ENCODE measurements at regions of chr7 and their contacts with region 1.

Region 1: DNA sequence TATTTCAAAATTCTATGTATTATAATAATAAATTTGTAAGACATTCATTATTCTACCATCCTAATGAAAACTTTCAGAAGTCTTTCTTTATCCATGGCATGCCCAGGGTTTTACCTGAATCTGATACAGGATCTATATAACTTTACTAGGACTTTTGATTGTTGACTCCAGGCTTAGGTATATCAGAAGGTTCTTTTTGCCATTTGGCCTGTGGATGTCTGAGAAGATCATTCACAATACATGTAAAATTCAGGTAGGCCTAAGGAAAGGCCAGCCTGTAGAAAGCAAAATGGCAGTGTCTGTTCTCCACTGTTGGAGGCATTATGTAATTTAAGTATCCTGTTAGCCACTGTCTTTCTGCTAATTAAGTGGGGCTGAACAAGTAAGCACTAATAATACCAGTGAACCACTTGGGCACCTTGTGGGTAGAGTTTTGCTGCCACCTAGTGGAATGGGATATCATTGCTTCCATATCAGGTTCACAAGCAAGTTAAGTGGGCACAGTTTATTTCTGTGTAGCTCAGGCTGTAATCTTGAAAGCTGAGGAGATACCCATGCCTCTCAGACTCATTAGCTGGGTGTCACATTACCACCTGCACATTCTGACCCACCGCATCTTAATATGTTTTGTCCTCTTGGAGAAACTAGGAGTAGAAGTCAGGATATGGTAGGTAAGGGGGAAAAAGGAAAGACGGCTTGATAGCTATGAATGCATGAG is 105.5 kb downstream of the SEPTIN7 start:
- DNase-seq: peak in 1 of 3 donors; percentile 82
- ATAC-seq: peak; percentile 90
- H3K4me3 ChIP-seq: no peak overlapping the region
- H3K4me1 ChIP-seq: no peaks in the 10 kb centered on the region
- CTCF ChIP-seq: peak; percentile 81

Region 2: DNA sequence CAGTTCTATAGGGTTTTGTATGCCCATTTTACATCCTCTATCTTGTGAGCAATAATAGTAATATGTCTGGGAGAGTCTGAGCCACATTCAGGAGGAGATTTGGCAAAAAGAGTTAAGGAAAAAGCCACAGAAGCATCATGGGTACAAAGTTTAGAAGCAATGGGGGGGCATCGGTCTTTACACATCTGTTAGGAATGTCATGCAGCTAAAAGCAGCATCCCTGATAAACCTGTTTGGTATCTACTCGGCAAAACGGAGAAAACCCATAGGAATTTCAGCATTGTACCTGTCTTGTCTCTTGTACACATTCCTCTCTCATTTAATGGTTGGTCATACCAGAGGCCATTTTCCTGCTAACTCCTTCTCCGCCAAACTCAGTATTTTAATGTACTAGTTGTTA is 198.9 kb before region 1 on chr7:
- intact Hi-C with region 1: loop called (anchors 5 kb)
- DNase-seq: no peak
- ATAC-seq: no peak
- H3K4me3 ChIP-seq: no peak overlapping the region
- H3K4me1 ChIP-seq: no peaks in the 10 kb centered on the region
- CTCF ChIP-seq: no peak

Region 3: DNA sequence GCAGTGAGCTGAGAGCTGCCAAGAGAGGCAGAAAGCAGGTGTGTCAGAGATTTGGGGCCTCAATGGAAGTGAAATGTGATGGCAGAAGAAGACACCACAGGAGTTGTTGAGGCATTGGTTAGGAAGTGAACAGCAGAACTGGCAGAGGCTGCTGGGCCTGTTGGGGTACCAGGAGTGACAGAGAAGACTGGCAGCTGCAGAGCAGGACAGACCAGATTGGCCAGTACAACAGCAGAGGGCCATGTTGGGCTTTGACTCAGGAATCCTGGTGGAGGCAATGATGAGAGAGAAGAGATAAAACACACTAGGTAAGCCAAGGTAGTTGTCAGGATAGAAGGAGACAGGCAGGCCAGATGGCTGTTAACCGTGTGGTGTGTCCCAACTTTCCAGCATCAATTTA is 191.5 kb before region 1 on chr7:
- intact Hi-C with region 1: loop called in 1 of 2 experiments (anchors 5 kb)
- DNase-seq: no peak
- ATAC-seq: peak; percentile 27
- H3K4me3 ChIP-seq: no peak overlapping the region
- H3K4me1 ChIP-seq: no peaks in the 10 kb centered on the region
- CTCF ChIP-seq: no peak

Region 4: GRCh38 chr7:35801392-35802101 is 104.8 kb before region 1 on chr7:
- intact Hi-C with region 1: loop called in 1 of 2 experiments (anchors 10 kb)
- DNase-seq: peak; percentile 71 to 86 (median 83)
- ATAC-seq: peak; percentile 57
- H3K4me3 ChIP-seq: peak overlapping the region; percentile 94
- H3K4me1 ChIP-seq: peaks cover 9% of the 10 kb centered on the region
- CTCF ChIP-seq: peak; percentile 30

Region 5: DNA sequence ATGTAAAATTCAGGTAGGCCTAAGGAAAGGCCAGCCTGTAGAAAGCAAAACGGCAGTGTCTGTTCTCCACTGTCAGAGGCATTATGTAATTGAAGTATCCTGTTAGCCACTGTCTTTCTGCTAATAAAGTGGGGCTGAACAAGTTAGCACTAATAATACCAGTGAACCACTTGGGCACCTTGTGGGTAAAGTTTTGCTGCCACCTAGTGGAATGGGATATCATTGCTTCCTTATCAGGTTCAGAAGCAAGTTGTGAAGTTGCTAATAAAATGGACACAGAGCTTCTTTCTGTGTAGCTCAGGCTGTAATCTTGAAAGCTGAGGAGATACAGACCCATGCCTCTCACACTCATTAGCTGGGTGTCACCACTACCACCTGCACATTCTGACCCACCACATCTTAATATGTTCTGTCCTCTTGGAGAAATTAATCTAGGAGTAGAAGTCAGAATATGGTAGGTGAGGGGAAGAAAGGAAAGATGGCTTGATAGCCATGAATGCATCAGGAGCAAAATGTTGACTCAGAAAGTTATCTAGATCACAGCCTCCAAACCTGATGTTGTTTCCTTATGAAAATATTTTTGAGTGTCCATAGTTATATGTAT is 69.6 kb after region 1 on chr7:
- intact Hi-C with region 1: loop called in 1 of 2 experiments (anchors 10 kb)
- DNase-seq: peak in 1 of 3 donors; percentile 78
- ATAC-seq: peak; percentile 74
- H3K4me3 ChIP-seq: no peak overlapping the region
- H3K4me1 ChIP-seq: no peaks in the 10 kb centered on the region
- CTCF ChIP-seq: peak; percentile 62